ENCODE measurements at regions of chr6 and their contacts with region 1.

Region 1: GRCh38 chr6:7140631-7141378 is 33.0 kb downstream of the RREB1 start:
- DNase-seq: peak; percentile 94 to 97
- ATAC-seq: peak; percentile 97
- H3K4me3 ChIP-seq: peak overlapping the region; percentile 35 to 40
- H3K27ac ChIP-seq: peak overlapping the region; percentile 79 to 84
- H3K4me1 ChIP-seq: no peaks in the 10 kb centered on the region
- H3K27me3 ChIP-seq: no peaks in the 10 kb centered on the region

Region 2: DNA sequence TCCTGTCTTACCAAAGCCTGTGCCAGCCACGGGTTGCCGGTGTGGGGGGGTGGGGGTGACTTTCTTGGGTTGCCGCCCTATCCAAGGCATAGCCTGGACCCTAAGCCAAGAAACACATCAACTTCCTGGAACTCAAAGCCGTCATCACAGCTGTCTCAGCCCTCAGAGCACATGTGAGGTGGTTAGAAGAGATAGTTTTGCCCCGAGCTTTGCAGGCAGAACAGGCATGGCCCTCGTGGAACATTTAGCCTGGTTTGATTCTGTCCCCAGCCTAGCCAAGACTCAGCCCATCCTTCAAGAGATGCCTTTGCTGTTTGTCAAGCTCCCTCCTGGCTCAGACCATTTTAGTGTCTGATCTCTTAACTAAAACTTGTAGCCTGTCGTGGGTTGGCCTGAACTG is 31.8 kb after region 1 on chr6:
- intact Hi-C with region 1: loop called in 1 of 2 experiments (anchors 2 kb)
- DNase-seq: peak in 1 of 2 donors; percentile 85
- ATAC-seq: peak; percentile 21
- H3K4me3 ChIP-seq: no peak overlapping the region
- H3K27ac ChIP-seq: peak overlapping the region in 1 of 2 donors; percentile 52
- H3K4me1 ChIP-seq: peaks cover 4 to 16% of the 10 kb centered on the region in 2 donors
- H3K27me3 ChIP-seq: no peaks in the 10 kb centered on the region

Region 3: GRCh38 chr6:7261032-7261841 is 120.4 kb after region 1 on chr6:
- intact Hi-C with region 1: no loop called
- DNase-seq: peak; percentile 91 to 92
- ATAC-seq: peak; percentile 94
- H3K4me3 ChIP-seq: peak overlapping the region; percentile 1 to 37
- H3K27ac ChIP-seq: peak overlapping the region in 1 of 2 donors; percentile 2
- H3K4me1 ChIP-seq: no peaks in the 10 kb centered on the region
- H3K27me3 ChIP-seq: no peaks in the 10 kb centered on the region

Region 4: DNA sequence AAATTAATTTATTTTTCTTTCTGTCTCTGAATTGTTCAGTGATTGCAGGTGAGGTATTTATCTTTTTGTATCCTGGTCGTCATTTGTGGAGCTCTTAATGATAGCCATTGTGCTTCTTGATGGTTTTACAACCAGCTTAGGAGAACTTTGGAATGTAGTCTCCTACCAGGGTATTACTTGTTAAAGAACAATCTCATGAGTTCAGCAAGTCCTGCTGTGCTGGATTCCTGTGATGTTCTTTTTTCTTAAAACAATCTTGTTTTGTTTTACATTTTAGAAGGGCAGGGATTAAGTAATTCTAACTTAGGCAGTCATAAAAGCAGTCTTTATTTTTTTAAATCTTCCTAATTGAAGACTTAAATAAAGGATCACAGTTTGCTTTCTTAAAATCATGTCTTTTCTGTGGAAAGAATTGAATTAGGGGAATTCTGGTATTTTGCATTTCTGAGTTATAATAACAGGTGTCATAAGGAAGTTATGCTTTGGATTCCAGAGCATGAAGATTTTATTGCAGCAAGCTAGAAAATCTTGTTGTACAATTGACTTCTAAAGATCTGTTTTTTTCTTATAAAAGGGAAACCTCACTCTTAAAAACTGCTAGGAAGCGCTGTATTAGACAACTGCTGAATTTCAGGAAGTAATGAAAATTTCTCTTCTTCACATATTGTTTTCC is 272.5 kb after region 1 on chr6:
- intact Hi-C with region 1: no loop called
- DNase-seq: no peak
- ATAC-seq: no peak
- H3K4me3 ChIP-seq: no peak overlapping the region
- H3K27ac ChIP-seq: no peak overlapping the region
- H3K4me1 ChIP-seq: no peaks in the 10 kb centered on the region
- H3K27me3 ChIP-seq: no peaks in the 10 kb centered on the region

Measured in aorta (tissue), 5 donors.